Colonic mucosa (tissue), 4 donors: ENCODE measurements at regions of chr3 and their contacts with region 1.

Region 1: DNA sequence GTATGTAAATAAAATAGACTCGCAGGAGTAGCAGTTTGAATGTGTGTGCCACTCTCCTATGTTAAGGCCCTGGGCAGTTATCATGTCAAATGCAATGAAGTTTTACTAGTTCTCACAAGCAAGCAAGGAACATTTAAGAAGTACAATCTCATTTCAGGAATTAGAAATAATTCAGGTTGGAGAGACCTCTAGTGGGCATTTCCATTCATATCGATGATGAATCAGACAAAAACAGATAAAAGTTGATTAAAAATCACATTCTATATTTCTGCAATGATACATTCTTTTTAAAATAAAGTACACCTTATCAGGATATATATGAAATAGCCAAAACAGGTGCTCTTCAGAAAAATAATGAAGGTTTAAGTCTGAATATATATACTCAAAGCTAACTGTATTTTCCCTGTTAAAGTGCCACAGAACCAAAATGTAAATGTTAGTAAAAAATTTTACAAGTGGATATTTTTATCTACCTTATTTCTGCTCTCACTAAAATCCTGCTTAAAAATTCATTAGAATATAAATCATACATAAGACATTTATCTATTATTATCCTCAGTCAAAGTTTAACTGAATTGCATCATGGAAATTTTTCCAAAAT is 492.4 kb upstream of the FRG2C start:
- DNase-seq: no peak
- H3K4me3 ChIP-seq: no peak overlapping the region
- H3K27ac ChIP-seq: no peak overlapping the region
- H3K4me1 ChIP-seq: no peaks in the 10 kb centered on the region
- H3K27me3 ChIP-seq: no peaks in the 10 kb centered on the region
- CTCF ChIP-seq: peak; percentile 18

Region 2: GRCh38 chr3:73868688-73869315 is 1302.9 kb before region 1 on chr3:
- intact Hi-C with region 1: loop called (anchors 10 kb)
- DNase-seq: peak; percentile 40
- H3K4me3 ChIP-seq: no peak overlapping the region
- H3K27ac ChIP-seq: no peak overlapping the region
- H3K4me1 ChIP-seq: no peaks in the 10 kb centered on the region
- H3K27me3 ChIP-seq: no peaks in the 10 kb centered on the region
- CTCF ChIP-seq: peak; percentile 33